A549 (cell line): ENCODE measurements at regions of chr20 and their contacts with region 1.

Region 1: DNA sequence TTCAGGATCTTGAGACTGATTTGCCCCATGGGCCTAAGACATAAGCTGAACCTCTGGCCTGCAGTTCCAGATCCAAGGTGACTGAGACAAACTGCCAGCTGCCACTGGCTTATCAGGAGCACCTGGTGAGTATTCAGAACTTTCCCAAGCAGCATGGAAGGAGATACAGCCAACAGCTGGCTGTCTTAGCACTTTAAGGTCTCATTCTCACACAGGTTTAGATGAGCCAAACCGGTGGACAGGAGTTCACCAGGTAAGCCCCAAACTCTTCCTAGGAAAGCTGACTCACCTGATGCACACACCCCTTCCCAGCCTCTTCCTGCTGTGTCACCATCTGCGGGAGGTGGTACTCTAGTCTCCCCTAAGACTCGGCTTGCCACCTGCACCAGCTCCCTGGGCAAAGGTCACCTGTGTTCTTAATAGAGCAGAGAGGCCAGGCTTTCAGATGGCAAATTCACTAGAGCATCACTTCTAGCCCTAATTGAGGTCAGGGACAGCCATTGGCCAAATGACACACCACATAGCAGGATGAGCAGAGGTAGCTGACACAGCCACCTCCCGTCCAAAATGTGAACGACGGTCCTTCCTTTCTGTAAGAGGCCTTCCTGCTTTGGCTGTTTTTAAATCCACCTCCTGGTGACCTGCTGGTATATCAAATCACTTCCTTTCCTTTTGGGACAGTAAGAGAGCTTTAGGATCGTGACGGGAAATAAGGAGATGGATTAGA is at the start of gene BANF2:
- DNase-seq: no peak
- ATAC-seq: 0 out of 6 replicates have a peak, but pooled peaks of 1 of the 2 experiments have one; percentile 6
- H3K4me3 ChIP-seq: no peak within 1 kb of the TSS
- H3K27ac ChIP-seq: no peak within 1 kb of the TSS
- H3K4me1 ChIP-seq: no peaks in the 10 kb centered on the region
- CTCF ChIP-seq: no peak
- EP300 ChIP-seq: no peak
- POLR2A ChIP-seq: no peak
- RAD21 ChIP-seq: no peak
- polyA plus RNA-seq, gene BANF2: not detected in 2 replicates

Region 2: DNA sequence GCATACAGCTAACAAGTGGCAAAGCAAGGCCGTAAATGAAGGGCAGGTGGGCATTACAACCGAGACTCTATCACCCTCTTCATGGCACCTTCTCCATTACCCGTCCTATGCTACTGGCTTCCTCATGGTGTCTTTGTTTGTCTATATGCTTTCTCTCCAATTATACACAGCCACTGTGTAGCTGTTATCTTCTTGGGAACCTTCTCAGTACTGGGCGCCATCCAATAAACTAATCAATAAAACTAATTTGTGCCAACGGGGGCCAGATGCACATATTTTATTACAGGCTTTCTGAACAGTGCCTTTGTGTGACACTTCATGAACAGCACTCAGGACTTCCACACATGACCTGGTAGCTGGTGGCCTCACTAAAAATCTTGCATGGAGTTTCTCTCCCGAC is 623.1 kb before region 1 on chr20:
- CTCF ChIA-PET with region 1: no interaction called
- POLR2A ChIA-PET with region 1: no interaction called
- DNase-seq: no peak
- ATAC-seq: no peak
- H3K4me3 ChIP-seq: no peak overlapping the region
- H3K27ac ChIP-seq: no peak overlapping the region
- H3K4me1 ChIP-seq: no peaks in the 10 kb centered on the region
- CTCF ChIP-seq: no peak
- EP300 ChIP-seq: no peak
- POLR2A ChIP-seq: no peak
- RAD21 ChIP-seq: no peak

Region 3: DNA sequence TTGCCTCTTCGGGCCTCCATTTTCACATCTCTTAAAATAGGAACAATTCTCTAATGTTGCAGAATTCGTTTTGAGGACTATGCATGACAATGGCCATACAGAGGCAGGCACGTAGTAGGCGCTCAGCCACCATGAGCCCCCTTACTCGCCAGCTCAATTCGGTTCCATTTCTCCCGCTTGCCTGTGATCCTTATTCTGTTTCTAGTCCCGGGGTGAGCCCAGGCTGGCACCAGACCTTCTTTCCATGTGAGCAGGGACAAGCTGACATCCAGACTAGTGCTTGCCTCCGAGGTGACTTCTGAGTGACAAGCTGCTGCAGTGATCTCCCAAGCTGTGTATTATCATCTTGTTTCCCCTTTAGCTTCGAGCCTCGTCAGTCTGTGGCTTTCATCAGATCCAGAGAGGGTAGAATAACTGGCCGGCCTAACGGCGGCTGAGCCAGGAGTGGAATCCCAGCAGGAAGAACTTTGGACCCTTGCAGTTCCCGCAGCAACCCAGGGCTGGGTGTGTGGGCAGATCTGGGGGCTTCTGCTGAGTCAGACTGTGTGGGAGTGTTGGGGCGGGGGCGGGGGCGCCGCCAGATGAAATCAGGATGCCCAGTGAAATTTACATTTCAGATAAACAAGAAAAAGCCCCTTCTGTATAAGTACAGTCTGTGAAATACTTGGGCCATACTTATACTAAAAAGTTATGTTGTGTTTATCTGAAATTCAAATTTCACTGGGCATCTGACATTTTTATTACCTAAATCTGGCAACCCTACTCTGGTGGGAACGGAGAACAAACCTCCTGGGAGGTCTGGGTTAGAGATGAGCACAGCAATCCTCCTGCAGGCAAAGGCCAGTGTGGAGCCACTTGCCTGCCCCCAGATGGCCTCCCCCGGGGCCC is 10.5 kb after region 1 on chr20:
- CTCF ChIA-PET with region 1: interaction called, 11 read pairs
- POLR2A ChIA-PET with region 1: no interaction called
- DNase-seq: no peak
- ATAC-seq: peak in 1 of 2 experiments; percentile 16; a peak in 1 of 6 replicates
- H3K4me3 ChIP-seq: no peak overlapping the region
- H3K27ac ChIP-seq: no peak overlapping the region
- H3K4me1 ChIP-seq: 0 out of 3 replicates have a peak, but pooled peaks cover 4% of the 10 kb centered on the region
- CTCF ChIP-seq: no peak
- EP300 ChIP-seq: no peak
- POLR2A ChIP-seq: no peak
- RAD21 ChIP-seq: no peak